ENCODE measurements at regions of chr6 and their contacts with region 1.

Region 1: GRCh38 chr6:41049521-41049920 is 3.5 kb upstream of the APOBEC2 start:
- DNase-seq: no peak
- H3K4me3 Mint-ChIP-seq: no peak overlapping the region
- H3K27ac Mint-ChIP-seq: no peak overlapping the region
- H3K4me1 Mint-ChIP-seq: peaks cover 13% of the 10 kb centered on the region
- H3K27me3 Mint-ChIP-seq: no peaks in the 10 kb centered on the region

Region 2: GRCh38 chr6:41039060-41039998 is 10.2 kb before region 1 on chr6 and contains the start of gene UNC5CL:
- CTCF ChIA-PET with region 1: interaction called, 14 read pairs
- POLR2A ChIA-PET with region 1: no interaction called
- intact Hi-C with region 1: no loop called
- DNase-seq: peak; percentile 64
- H3K4me3 Mint-ChIP-seq: no peak within 1 kb of the TSS
- H3K27ac Mint-ChIP-seq: no peak within 1 kb of the TSS
- H3K4me1 Mint-ChIP-seq: peaks cover 3% of the 10 kb centered on the region
- H3K27me3 Mint-ChIP-seq: no peaks in the 10 kb centered on the region
- total RNA-seq, gene UNC5CL: 2.4 to 2.5 TPM